Heart left ventricle (tissue), 16 donors: ENCODE measurements at regions of chr6 and their contacts with region 1.

Region 1: DNA sequence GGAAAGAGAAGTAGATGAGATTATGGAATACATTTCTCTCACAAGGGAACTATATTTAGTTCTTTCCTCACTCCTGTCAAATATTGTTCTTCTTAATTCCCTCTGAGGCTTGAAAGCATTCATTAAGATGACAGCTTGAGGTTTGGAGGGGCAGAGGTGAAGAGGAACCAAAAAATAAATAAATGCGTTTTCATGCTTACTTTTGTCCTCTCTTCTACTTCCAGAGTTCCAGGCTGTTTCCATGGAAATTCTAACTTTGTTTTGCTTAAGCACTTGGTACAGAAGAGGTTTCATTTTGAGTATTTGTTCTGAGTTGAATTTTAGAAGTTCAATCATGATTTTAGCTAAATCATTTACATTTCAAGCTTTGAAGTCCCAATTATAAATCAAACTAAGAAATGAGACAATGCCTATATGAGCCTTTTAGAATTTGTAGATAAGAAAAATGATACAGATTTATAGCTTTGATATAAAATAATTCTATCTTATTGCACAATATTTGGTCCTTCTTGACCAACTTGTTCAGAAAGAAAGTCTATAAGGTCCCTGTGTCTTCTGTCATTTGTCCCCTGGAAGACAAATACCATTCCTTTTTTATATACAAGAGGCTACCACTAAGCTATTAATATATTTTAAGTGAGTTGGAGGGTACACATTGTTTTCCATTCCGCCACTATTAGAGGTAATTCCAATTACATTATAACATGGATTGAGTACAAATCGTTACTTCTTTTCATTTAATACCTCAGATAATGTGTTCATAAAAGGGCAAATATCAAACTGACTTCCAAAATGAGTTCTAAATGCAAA is 16.3 kb downstream of the RBM24 start:
- DNase-seq: no peak
- ATAC-seq: peak in 3 of 4 donors; percentile 24 to 56 (median 36)
- H3K4me3 ChIP-seq: no peak overlapping the region
- H3K27ac ChIP-seq: peak overlapping the region; percentile 4 to 69 (median 36)
- H3K4me1 ChIP-seq: peaks cover 0 to 32% (median 4%) of the 10 kb centered on the region in 12 donors
- H3K27me3 ChIP-seq: no peaks in the 10 kb centered on the region
- CTCF ChIP-seq: no peak
- POLR2A ChIP-seq: no peak

Region 2: GRCh38 chr6:17101422-17102257 is 195.8 kb before region 1 on chr6 and contains the start of gene STMND1:
- intact Hi-C with region 1: no loop called
- DNase-seq: peak in 4 of 5 donors; percentile 20 to 46 (median 43)
- ATAC-seq: peak in 3 of 4 donors; percentile 47 to 59 (median 48)
- H3K4me3 ChIP-seq: peak within 1 kb of the TSS; percentile 8 to 59 (median 44)
- H3K27ac ChIP-seq: no peak within 1 kb of the TSS
- H3K4me1 ChIP-seq: peaks cover 0 to 22% (median 6%) of the 10 kb centered on the region in 12 donors
- H3K27me3 ChIP-seq: peaks cover 0 to 29% (median 0%) of the 10 kb centered on the region in 9 donors
- CTCF ChIP-seq: no peak
- POLR2A ChIP-seq: no peak
- total RNA-seq, gene STMND1: not detected

Region 3: GRCh38 chr6:17240813-17241500 is 56.5 kb before region 1 on chr6:
- intact Hi-C with region 1: no loop called
- DNase-seq: no peak
- ATAC-seq: no peak
- H3K4me3 ChIP-seq: no peak overlapping the region
- H3K27ac ChIP-seq: no peak overlapping the region
- H3K4me1 ChIP-seq: no peaks in the 10 kb centered on the region
- H3K27me3 ChIP-seq: no peaks in the 10 kb centered on the region
- CTCF ChIP-seq: no peak
- POLR2A ChIP-seq: no peak

Region 4: DNA sequence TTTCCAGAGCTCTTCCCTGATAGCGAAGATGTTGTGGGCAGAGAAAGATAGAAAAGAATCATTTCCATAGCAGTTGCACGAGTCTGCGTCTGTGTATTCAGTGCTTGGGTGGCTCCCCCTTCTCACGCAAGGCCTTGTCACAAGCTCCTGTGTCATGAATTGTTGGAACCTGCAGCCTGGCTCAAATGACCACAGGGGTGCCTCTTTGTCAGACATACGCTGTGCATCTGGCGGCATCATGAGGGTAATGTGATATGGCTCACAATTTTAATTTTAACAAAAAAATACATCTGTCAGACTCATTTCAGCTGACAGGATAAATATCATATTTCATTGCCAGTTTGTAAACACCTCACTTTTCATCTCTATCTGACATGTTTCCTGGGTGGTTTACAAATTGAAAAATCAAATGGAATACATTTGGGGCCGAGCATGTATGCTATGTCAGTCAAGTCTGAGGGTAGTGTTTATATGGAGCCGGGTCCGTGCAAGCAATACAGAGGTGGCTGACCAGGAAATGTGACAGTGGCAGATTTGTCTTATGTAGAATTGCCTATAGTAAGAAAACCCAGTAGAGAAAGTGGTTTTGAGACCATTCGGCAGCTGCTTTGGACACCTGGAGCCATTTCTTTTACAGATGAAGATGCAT is 186.8 kb after region 1 on chr6:
- intact Hi-C with region 1: loop called in 2 of 10 experiments (anchors 5 kb)
- DNase-seq: peak in 3 of 5 donors; percentile 28 to 42 (median 41)
- ATAC-seq: peak; percentile 23 to 87 (median 56)
- H3K4me3 ChIP-seq: no peak overlapping the region
- H3K27ac ChIP-seq: peak overlapping the region in 11 of 12 donors; percentile 9 to 81 (median 64)
- H3K4me1 ChIP-seq: peaks cover 0 to 42% (median 0%) of the 10 kb centered on the region in 12 donors
- H3K27me3 ChIP-seq: no peaks in the 10 kb centered on the region
- CTCF ChIP-seq: no peak
- POLR2A ChIP-seq: no peak